Prostate gland (tissue), 2 donors: ENCODE measurements at regions of chr2 and their contacts with region 1.

Region 1: DNA sequence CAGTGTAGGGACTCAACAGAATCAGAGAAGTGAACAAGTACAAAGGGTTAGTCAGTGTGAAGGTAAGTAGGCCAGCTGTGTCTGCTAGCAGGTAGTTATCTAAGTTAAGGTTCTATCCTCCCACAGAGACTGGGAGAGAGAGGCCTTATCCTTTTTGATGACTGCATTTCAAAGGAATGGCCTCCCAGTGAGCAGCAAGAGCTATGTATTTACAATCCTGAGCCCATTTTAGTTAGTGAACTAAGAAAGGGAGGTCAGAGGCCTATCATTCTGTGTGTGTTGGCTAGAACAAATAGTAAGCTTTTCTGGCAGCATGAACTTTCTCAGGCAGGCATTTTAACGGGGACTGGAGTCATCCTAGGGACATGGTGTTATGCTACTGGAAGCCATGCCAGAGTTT is 182.9 kb downstream of the VWC2L start:
- DNase-seq: no peak
- H3K4me3 ChIP-seq: no peak overlapping the region
- H3K27ac ChIP-seq: peak overlapping the region in 1 of 2 donors; percentile 26
- H3K4me1 ChIP-seq: no peaks in the 10 kb centered on the region
- H3K27me3 ChIP-seq: no peaks in the 10 kb centered on the region
- CTCF ChIP-seq: no peak
- POLR2A ChIP-seq: no peak

Region 2: GRCh38 chr2:214809751-214810564 is 216.2 kb after region 1 on chr2:
- intact Hi-C with region 1: loop called (anchors 5 kb)
- DNase-seq: peak; percentile 98
- H3K4me3 ChIP-seq: peak overlapping the region; percentile 61 to 73
- H3K27ac ChIP-seq: peak overlapping the region; percentile 94 to 95
- H3K4me1 ChIP-seq: no peaks in the 10 kb centered on the region
- H3K27me3 ChIP-seq: no peaks in the 10 kb centered on the region
- CTCF ChIP-seq: no peak
- POLR2A ChIP-seq: peak; percentile 77

Region 3: GRCh38 chr2:215010390-215010789 is 416.7 kb after region 1 on chr2:
- intact Hi-C with region 1: no loop called
- DNase-seq: no peak
- H3K4me3 ChIP-seq: no peak overlapping the region
- H3K27ac ChIP-seq: no peak overlapping the region
- H3K4me1 ChIP-seq: no peaks in the 10 kb centered on the region
- H3K27me3 ChIP-seq: no peaks in the 10 kb centered on the region
- CTCF ChIP-seq: no peak
- POLR2A ChIP-seq: no peak

Region 4: GRCh38 chr2:215435809-215436704 is 842.3 kb after region 1 on chr2 and contains the start of gene FN1:
- intact Hi-C with region 1: loop called (anchors 10 kb)
- DNase-seq: peak; percentile 77
- H3K4me3 ChIP-seq: peak within 1 kb of the TSS; percentile 44 to 59
- H3K27ac ChIP-seq: peak within 1 kb of the TSS; percentile 70 to 72
- H3K4me1 ChIP-seq: no peaks in the 10 kb centered on the region
- H3K27me3 ChIP-seq: no peaks in the 10 kb centered on the region
- CTCF ChIP-seq: no peak
- POLR2A ChIP-seq: no peak
- total RNA-seq, gene FN1: 84.2 to 257 TPM